AG04449 (cell line): ENCODE measurements at regions of chr3 and their contacts with region 1.

Region 1: GRCh38 chr3:4978204-4978965 is 852 bp upstream of the BHLHE40 start:
- DNase-seq: peak; percentile 94
- H3K4me3 ChIP-seq: peak overlapping the region; percentile 99
- CTCF ChIP-seq: no peak

Region 2: GRCh38 chr3:4334548-4334947 is 643.8 kb before region 1 on chr3:
- CTCF ChIA-PET with region 1: no interaction called
- POLR2A ChIA-PET with region 1: no interaction called
- DNase-seq: no peak
- H3K4me3 ChIP-seq: no peak overlapping the region
- CTCF ChIP-seq: no peak

Region 3: GRCh38 chr3:4722103-4722502 is 256.3 kb before region 1 on chr3:
- CTCF ChIA-PET with region 1: interaction called, 411 read pairs
- POLR2A ChIA-PET with region 1: interaction called, 31 read pairs
- DNase-seq: no peak
- H3K4me3 ChIP-seq: no peak overlapping the region
- CTCF ChIP-seq: peak; percentile 44

Region 4: GRCh38 chr3:4963669-4964589 is 14.5 kb before region 1 on chr3:
- CTCF ChIA-PET with region 1: interaction called, 11 read pairs
- POLR2A ChIA-PET with region 1: no interaction called
- DNase-seq: no peak
- H3K4me3 ChIP-seq: no peak overlapping the region
- CTCF ChIP-seq: no peak

Region 5: GRCh38 chr3:4994823-4995499 is 16.6 kb after region 1 on chr3:
- CTCF ChIA-PET with region 1: interaction called, 13 read pairs
- POLR2A ChIA-PET with region 1: interaction called, 12 read pairs
- DNase-seq: no peak
- H3K4me3 ChIP-seq: no peak overlapping the region; the same call in 1 of the 2 replicates
- CTCF ChIP-seq: no peak

Region 6: GRCh38 chr3:5026331-5027218 is 48.2 kb after region 1 on chr3:
- CTCF ChIA-PET with region 1: interaction called, 39 read pairs
- POLR2A ChIA-PET with region 1: interaction called, 10 read pairs
- DNase-seq: peak; percentile 67
- H3K4me3 ChIP-seq: peak overlapping the region; percentile 59
- CTCF ChIP-seq: peak; percentile 84